Natural killer cell (primary cell): ENCODE measurements at regions of chr11 and their contacts with region 1.

Region 1: GRCh38 chr11:60363542-60364510 is 14.5 kb upstream of the MS4A7 start:
- DNase-seq: peak; percentile 29 to 79
- ATAC-seq: peak; percentile 42 to 75 (median 63)
- H3K4me3 ChIP-seq: peak overlapping the region; percentile 24
- H3K4me3 Mint-ChIP-seq: no peak overlapping the region
- H3K27ac ChIP-seq: peak overlapping the region; percentile 50
- H3K27ac Mint-ChIP-seq: peak overlapping the region in 1 of 2 donors; percentile 14
- H3K4me1 ChIP-seq: peaks cover 3% of the 10 kb centered on the region
- H3K4me1 Mint-ChIP-seq: peaks cover 0 to 8% of the 10 kb centered on the region in 2 donors
- H3K27me3 ChIP-seq: no peaks in the 10 kb centered on the region
- H3K27me3 Mint-ChIP-seq: peaks cover 12 to 24% of the 10 kb centered on the region in 2 donors
- CTCF ChIP-seq: peak; percentile 89

Region 2: GRCh38 chr11:60485986-60486385 is 122.2 kb after region 1 on chr11:
- intact Hi-C with region 1: loop called (anchors 5 kb)
- DNase-seq: peak in 1 of 2 donors; percentile 55
- ATAC-seq: peak in 1 of 3 donors; percentile 48
- H3K4me3 ChIP-seq: no peak overlapping the region
- H3K4me3 Mint-ChIP-seq: no peak overlapping the region
- H3K27ac ChIP-seq: no peak overlapping the region
- H3K27ac Mint-ChIP-seq: no peak overlapping the region
- H3K4me1 ChIP-seq: no peaks in the 10 kb centered on the region
- H3K4me1 Mint-ChIP-seq: no peaks in the 10 kb centered on the region
- H3K27me3 ChIP-seq: no peaks in the 10 kb centered on the region
- H3K27me3 Mint-ChIP-seq: peaks cover 7 to 23% of the 10 kb centered on the region in 2 donors
- CTCF ChIP-seq: peak; percentile 33

Region 3: GRCh38 chr11:60615497-60615896 is 251.7 kb after region 1 on chr11:
- intact Hi-C with region 1: loop called (anchors 1 kb)
- DNase-seq: no peak
- ATAC-seq: no peak
- H3K4me3 ChIP-seq: no peak overlapping the region
- H3K4me3 Mint-ChIP-seq: no peak overlapping the region
- H3K27ac ChIP-seq: no peak overlapping the region
- H3K27ac Mint-ChIP-seq: no peak overlapping the region
- H3K4me1 ChIP-seq: no peaks in the 10 kb centered on the region
- H3K4me1 Mint-ChIP-seq: no peaks in the 10 kb centered on the region
- H3K27me3 ChIP-seq: no peaks in the 10 kb centered on the region
- H3K27me3 Mint-ChIP-seq: peaks cover 0 to 15% of the 10 kb centered on the region in 2 donors
- CTCF ChIP-seq: no peak